Mammary epithelial cell (primary cell): ENCODE measurements at regions of chr14 and their contacts with region 1.

Region 1: DNA sequence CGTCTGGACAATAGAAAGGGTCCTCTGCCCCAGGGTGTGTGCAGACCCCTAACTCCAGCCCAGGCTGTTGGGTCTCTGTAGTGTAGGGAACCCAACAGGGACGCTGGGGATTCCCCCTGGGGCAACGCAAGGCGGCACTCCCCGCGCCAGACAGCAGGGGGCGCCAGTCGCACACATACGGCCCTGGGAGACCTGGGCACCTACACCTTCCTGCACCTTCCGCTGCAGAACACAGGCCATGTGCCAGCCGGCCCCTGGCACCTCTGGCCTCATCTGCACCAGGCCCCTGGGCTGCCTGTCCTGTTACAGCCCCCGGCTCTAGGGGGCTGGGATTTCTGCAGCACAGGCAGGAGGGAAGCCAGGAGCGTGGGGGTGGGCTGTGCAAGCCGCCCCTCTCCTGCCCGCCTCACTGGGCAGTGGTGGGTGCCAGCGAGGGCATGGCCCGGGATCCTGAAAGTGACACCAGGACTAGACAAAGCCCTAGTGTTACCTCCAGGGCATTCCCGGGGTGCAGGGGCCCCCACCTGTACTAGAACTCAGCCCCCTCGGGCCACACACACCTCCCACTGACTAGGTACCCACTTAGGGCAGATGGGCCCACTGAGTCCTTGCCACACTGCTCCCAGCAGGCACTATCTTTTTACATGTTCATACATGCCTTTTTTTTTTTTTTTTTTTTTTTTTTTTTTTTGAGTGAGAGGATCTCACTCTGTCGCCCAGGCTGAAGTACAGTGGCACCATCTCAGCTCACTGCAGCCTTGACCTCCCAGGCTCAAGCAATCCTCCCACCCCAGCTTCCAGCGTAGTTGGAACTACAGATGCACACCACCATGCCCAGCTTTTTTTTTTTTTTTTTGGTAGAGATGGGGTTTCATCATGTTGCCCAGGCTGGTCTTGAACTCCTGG is 37.5 kb downstream of the CCNK start:
- DNase-seq: peak; percentile 58
- H3K4me3 ChIP-seq: no peak overlapping the region
- H3K27ac ChIP-seq: no peak overlapping the region
- H3K4me1 ChIP-seq: peaks cover 4% of the 10 kb centered on the region
- H3K27me3 ChIP-seq: no peaks in the 10 kb centered on the region
- CTCF ChIP-seq: peak; percentile 95 to 96

Region 2: GRCh38 chr14:99467338-99468078 is 51.2 kb before region 1 on chr14:
- CTCF ChIA-PET with region 1: no interaction called
- dilution Hi-C with region 1: no loop called
- in situ Hi-C with region 1: no loop called
- intact Hi-C with region 1: no loop called
- DNase-seq: no peak
- H3K4me3 ChIP-seq: no peak overlapping the region
- H3K27ac ChIP-seq: no peak overlapping the region
- H3K4me1 ChIP-seq: peaks cover 2% of the 10 kb centered on the region
- H3K27me3 ChIP-seq: no peaks in the 10 kb centered on the region
- CTCF ChIP-seq: no peak

Region 3: GRCh38 chr14:99729991-99730868 is 211.5 kb after region 1 on chr14:
- CTCF ChIA-PET with region 1: no interaction called
- dilution Hi-C with region 1: no loop called
- in situ Hi-C with region 1: no loop called
- intact Hi-C with region 1: loop called (anchors 5 kb)
- DNase-seq: no peak
- H3K4me3 ChIP-seq: no peak overlapping the region
- H3K27ac ChIP-seq: no peak overlapping the region
- H3K4me1 ChIP-seq: peaks cover 6% of the 10 kb centered on the region
- H3K27me3 ChIP-seq: peaks cover 5% of the 10 kb centered on the region
- CTCF ChIP-seq: peak; percentile 70 to 75